Cardiac septum (tissue), 1 donor: ENCODE measurements at regions of chr2 and their contacts with region 1.

Region 1: GRCh38 chr2:65186872-65187851 is 40.5 kb upstream of the ACTR2 start:
- DNase-seq: peak; percentile 92

Region 2: GRCh38 chr2:64914735-64915509 is 272.2 kb before region 1 on chr2:
- intact Hi-C with region 1: loop called (anchors 2 kb)
- DNase-seq: peak; percentile 54

Region 3: GRCh38 chr2:65031341-65032018 is 155.7 kb before region 1 on chr2:
- intact Hi-C with region 1: no loop called
- DNase-seq: no peak

Region 4: GRCh38 chr2:65064728-65065552 is 122.2 kb before region 1 on chr2:
- intact Hi-C with region 1: loop called (anchors 5 kb)
- DNase-seq: no peak

Region 5: GRCh38 chr2:65081232-65081685 is 105.9 kb before region 1 on chr2:
- intact Hi-C with region 1: loop called (anchors 5 kb)
- DNase-seq: no peak